ENCODE measurements at regions of chr6 and their contacts with region 1.

Region 1: DNA sequence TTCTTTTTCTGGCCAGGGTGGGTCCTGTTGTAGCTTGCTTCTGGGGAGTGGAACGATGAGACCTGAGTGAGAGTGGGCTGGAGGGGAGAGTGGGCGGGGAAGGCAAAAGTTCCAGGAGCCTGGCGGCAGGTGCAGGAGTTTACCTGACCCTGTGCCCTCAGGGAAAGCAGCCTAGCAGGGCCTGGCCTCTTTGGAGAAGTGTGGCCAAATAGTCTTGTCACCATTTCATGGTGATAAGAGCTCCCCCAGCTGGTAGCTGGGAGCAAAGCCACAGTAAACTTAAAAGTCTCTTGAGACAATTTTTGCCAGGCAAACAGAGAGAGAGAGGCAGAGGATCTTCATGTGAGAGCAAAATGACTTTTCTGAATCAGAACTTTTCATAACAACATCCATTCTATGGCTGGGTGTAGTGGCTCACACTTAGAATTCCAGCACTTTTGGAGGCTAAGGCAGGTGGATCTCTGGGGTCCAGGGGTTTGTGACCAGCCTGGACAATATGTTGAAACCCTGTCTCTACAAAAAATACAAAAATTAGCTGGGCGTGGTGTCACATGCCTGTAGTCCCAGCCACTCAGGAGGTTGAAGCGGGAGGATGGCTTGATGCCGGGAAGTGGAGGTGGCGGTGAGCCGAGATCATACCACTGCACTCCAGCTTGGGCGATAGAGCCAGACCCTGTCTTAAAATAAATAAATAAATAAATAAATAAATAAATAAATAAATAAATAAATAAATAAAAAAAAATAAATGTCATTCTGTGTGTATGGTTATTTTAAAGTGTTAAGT is 161.8 kb upstream of the SCGN start:
- DNase-seq: peak; percentile 47
- H3K4me3 ChIP-seq: no peak overlapping the region
- H3K27ac ChIP-seq: no peak overlapping the region
- H3K27me3 ChIP-seq: no peaks in the 10 kb centered on the region
- CTCF ChIP-seq: peak; percentile 91

Region 2: DNA sequence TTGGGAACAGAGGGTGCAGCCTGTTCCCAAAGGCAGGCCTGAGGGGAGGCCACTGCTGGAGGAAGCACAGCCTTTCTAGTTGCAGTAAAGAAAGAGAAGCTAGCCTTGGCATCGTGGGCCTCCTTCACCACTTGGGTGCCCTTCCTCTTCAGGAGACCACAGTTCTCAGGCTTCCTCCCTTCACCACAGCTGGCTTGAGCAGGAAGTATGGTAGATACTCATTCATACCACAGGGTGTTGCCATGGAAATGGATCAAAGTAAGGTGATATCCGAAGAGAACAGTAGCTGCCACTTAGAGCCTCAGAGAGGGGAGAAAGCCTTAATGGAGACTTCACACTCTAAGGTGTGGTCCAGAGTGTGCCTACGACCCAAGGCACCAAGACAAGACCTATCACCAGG is 434.1 kb before region 1 on chr6:
- CTCF ChIA-PET with region 1: no interaction called
- POLR2A ChIA-PET with region 1: no interaction called
- DNase-seq: no peak
- H3K4me3 ChIP-seq: no peak overlapping the region
- H3K27ac ChIP-seq: no peak overlapping the region
- H3K27me3 ChIP-seq: no peaks in the 10 kb centered on the region
- CTCF ChIP-seq: no peak

Region 3: GRCh38 chr6:25250878-25251277 is 239.3 kb before region 1 on chr6:
- CTCF ChIA-PET with region 1: interaction called, 12 read pairs
- POLR2A ChIA-PET with region 1: interaction called, 5 read pairs
- DNase-seq: no peak
- H3K4me3 ChIP-seq: no peak overlapping the region
- H3K27ac ChIP-seq: no peak overlapping the region
- H3K27me3 ChIP-seq: no peaks in the 10 kb centered on the region
- CTCF ChIP-seq: no peak

Region 4: DNA sequence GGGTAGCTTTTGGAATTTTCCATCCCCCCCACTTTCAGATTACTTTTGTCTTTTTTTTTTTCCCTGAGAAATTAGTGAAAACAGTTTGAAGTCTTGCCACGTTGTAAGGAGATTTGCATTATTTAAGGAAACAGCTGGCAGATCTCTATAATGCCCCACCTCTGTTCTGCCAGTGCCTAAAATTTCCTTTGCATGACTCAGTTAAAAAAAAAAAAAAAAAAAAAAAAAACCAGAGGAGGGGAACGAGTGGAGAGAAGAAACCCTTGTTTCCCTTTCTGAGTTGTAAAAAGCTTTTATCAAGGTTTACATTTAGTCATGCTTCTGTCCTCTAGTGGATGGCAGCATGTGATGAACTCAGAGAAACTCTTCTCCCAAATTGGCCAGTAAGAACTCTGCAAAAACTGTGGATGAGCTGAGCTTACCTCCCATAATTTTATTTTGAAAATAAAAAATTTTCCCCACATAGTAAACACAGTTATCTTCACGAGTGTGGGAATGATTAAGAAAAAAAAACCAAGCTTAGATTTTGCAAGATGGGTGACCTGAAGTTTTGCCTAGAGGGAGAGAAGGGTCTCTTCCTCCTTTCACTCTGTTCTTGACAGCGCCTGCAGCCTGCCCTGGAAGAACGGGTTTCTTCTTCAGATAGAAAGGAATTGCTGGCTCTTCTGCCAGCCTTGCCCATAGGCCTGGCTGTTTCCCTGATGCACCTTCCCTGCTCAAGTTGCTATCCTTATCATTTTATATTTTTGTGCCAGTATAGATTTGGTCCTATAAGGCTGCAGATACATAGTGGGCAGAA is 177.3 kb before region 1 on chr6:
- CTCF ChIA-PET with region 1: interaction called, 20 read pairs
- POLR2A ChIA-PET with region 1: no interaction called
- DNase-seq: no peak
- H3K4me3 ChIP-seq: no peak overlapping the region
- H3K27ac ChIP-seq: peak overlapping the region; percentile 31
- H3K27me3 ChIP-seq: no peaks in the 10 kb centered on the region
- CTCF ChIP-seq: peak; percentile 12; the same call in 1 of the 2 replicates

Region 5: GRCh38 chr6:25413207-25413905 is 76.9 kb before region 1 on chr6:
- CTCF ChIA-PET with region 1: no interaction called
- POLR2A ChIA-PET with region 1: no interaction called
- DNase-seq: no peak
- H3K4me3 ChIP-seq: no peak overlapping the region
- H3K27ac ChIP-seq: no peak overlapping the region
- H3K27me3 ChIP-seq: no peaks in the 10 kb centered on the region
- CTCF ChIP-seq: no peak

Region 6: GRCh38 chr6:25441663-25442270 is 48.4 kb before region 1 on chr6:
- CTCF ChIA-PET with region 1: no interaction called
- POLR2A ChIA-PET with region 1: no interaction called
- DNase-seq: no peak
- H3K4me3 ChIP-seq: no peak overlapping the region
- H3K27ac ChIP-seq: no peak overlapping the region
- H3K27me3 ChIP-seq: no peaks in the 10 kb centered on the region
- CTCF ChIP-seq: no peak

Region 7: DNA sequence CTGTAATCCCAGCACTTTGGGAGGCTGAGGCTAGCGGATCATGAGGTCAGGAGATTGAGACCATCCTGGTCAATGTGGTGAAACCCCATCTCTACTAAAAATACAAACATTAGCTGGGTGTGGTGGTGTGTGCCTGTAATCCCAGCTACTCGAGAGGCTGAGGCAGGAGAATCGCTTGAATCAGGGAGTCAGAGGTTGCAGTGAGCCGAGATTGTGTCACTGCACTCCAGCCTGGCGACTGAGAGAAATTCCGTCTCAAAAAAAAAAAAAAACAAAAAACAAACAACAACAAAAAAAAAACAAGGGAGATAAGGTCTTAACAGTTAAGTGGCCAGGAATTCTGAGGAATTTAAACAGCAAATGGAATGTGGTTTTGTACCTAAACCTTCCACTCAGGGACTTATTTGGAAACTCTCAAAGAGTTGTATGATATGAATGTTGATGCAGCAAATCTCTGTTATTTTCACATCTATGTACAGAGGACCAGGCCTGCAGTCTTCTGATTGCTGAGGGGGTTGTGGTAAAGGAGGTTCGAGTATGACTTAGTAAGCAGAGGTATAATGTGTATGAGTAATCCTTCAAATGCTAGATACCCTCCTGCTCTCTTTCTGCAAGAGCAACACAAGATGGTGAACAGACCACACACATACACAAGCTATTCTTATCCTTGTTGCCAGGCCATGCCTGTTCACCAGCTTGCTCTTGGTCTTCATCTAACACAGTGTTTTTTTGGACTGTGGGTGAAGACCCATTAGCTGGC is 13.2 kb before region 1 on chr6:
- CTCF ChIA-PET with region 1: interaction called, 48 read pairs
- POLR2A ChIA-PET with region 1: no interaction called
- DNase-seq: no peak
- H3K4me3 ChIP-seq: no peak overlapping the region
- H3K27ac ChIP-seq: no peak overlapping the region
- H3K27me3 ChIP-seq: no peaks in the 10 kb centered on the region
- CTCF ChIP-seq: no peak

Region 8: DNA sequence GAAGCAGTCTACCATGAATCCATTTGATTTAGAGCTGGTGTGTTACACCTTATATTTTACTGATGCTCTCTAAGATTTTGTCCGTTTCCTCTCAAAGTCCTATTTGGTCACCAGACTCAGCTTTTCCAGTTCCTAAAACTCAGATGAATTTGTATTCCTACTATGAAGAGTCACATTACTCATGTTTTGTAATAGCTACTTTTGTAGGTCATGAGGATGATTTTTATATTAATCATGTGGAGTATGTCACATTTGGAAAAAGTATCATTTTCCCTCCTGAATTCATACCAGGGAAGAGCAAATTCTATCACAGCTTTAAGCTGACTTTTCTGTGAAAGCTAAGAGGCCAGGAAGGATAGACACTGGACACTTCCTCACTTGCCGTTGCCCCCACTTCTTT is 21.2 kb after region 1 on chr6:
- CTCF ChIA-PET with region 1: interaction called, 36 read pairs
- POLR2A ChIA-PET with region 1: no interaction called
- DNase-seq: no peak
- H3K4me3 ChIP-seq: no peak overlapping the region
- H3K27ac ChIP-seq: no peak overlapping the region
- H3K27me3 ChIP-seq: no peaks in the 10 kb centered on the region
- CTCF ChIP-seq: no peak